ENCODE measurements at regions of chr4 and their contacts with region 1.

Region 1: GRCh38 chr4:16264798-16265197 is 38.5 kb upstream of the TAPT1 start:
- DNase-seq: peak; percentile 73
- ATAC-seq: peak; percentile 43
- H3K4me3 ChIP-seq: no peak overlapping the region
- H3K4me3 Mint-ChIP-seq: no peak overlapping the region
- H3K27ac ChIP-seq: peak overlapping the region in 1 of 2 donors; percentile 3
- H3K27ac Mint-ChIP-seq: no peak overlapping the region
- H3K4me1 ChIP-seq: peaks cover 36 to 44% of the 10 kb centered on the region in 2 donors
- H3K4me1 Mint-ChIP-seq: peaks cover 36% of the 10 kb centered on the region
- H3K27me3 ChIP-seq: no peaks in the 10 kb centered on the region
- H3K27me3 Mint-ChIP-seq: no peaks in the 10 kb centered on the region
- CTCF ChIP-seq: peak; percentile 78

Region 2: DNA sequence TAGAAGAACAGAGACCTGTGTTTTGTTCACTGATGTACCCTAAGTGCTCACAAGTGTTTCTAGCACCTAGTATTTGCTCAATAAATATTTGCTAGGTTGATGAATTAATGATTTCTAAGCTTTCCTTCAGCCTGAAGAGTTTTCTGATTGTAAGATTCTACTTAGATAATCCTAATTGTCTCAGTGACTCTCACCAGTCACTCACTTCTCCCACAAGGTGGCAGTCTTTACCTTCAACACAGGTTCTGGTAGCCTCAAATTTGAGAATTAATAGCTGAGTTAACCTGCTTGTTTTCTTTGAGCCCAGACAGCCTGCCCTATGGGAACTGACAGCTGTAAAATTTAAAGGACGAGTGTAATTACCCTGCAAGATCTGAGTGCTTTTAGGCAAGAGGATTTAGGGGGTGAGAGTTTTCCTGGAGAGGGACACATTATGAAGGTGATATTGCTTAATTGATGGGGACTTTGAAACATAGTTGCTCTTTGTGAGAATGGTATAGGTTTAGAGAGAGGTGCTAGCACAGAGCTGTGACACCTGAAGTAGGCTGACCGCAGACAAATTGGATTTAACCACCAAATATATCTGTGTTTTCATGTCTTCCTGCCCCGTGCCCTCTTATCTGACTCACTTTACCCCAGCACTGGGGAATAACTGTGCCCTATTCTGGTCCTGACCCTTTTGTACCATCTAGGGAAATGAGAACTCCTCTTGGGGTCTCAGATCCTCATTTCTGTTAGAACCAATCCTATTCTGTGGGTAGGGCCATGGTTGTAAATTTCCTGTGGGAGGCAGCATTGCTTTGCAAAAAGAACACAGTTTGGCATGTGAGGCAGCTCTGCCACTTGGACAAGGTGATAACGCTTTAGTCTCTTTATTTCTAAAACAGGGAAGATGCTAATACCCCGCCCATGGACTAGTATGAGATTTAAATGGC is 458.9 kb before region 1 on chr4:
- CTCF ChIA-PET with region 1: interaction called, 15 read pairs
- POLR2A ChIA-PET with region 1: no interaction called
- intact Hi-C with region 1: loop called (anchors 10 kb)
- DNase-seq: peak; percentile 62
- ATAC-seq: peak; percentile 67
- H3K4me3 ChIP-seq: no peak overlapping the region
- H3K4me3 Mint-ChIP-seq: no peak overlapping the region
- H3K27ac ChIP-seq: no peak overlapping the region
- H3K27ac Mint-ChIP-seq: no peak overlapping the region
- H3K4me1 ChIP-seq: peaks cover 27 to 30% of the 10 kb centered on the region in 2 donors
- H3K4me1 Mint-ChIP-seq: peaks cover 44% of the 10 kb centered on the region
- H3K27me3 ChIP-seq: no peaks in the 10 kb centered on the region
- H3K27me3 Mint-ChIP-seq: no peaks in the 10 kb centered on the region
- CTCF ChIP-seq: peak; percentile 84

Region 3: GRCh38 chr4:16019649-16020048 is 245.1 kb before region 1 on chr4:
- CTCF ChIA-PET with region 1: interaction called, 23 read pairs
- POLR2A ChIA-PET with region 1: no interaction called
- intact Hi-C with region 1: no loop called
- DNase-seq: no peak
- ATAC-seq: no peak
- H3K4me3 ChIP-seq: no peak overlapping the region
- H3K4me3 Mint-ChIP-seq: no peak overlapping the region
- H3K27ac ChIP-seq: no peak overlapping the region
- H3K27ac Mint-ChIP-seq: no peak overlapping the region
- H3K4me1 ChIP-seq: no peaks in the 10 kb centered on the region
- H3K4me1 Mint-ChIP-seq: no peaks in the 10 kb centered on the region
- H3K27me3 ChIP-seq: no peaks in the 10 kb centered on the region
- H3K27me3 Mint-ChIP-seq: peaks cover 14% of the 10 kb centered on the region
- CTCF ChIP-seq: no peak

Region 4: DNA sequence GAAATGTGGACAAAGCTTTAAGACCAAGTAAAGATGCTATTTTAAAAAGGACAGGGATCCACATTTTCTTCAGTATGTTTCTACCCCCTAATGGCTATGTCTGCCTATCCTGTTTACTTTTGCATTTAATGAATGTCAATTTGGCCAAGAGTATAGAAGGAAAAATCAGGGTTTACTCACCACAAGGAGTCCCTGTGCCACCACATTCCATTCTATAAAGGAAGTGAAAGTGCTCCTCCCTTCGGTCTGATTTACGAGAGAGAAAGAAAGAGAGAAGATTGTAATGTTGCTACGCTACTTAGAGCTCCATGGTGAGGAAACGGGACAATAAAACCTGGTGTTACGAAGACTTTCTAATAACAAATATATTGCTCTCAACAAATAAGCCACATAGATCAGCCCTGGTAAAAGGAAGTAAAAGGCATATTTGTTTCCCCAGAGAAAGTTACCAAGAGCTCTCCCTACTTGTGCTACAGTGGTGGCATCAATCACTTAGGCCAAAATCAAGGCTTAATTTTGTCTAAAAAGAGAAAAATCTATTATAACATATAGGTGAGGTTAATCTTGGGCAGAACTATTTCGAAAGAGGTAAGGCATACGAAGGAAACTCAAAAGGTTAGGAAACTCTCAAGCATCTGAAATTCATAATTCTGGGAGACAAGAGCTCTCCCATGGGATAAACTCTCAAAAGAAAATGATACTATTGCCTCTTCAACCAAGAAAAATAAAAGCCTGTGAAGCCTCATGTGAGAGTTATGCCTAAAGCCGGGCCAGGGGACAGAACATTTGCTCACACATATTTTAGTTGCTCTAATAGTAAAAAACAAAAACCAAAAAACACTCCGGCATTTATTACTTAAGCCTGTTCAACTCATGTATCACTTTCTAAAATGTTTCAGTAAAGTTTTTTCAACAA is 68.1 kb before region 1 on chr4:
- CTCF ChIA-PET with region 1: interaction called, 50 read pairs
- POLR2A ChIA-PET with region 1: interaction called, 3 read pairs
- intact Hi-C with region 1: loop called (anchors 1 kb)
- DNase-seq: peak; percentile 73
- ATAC-seq: peak; percentile 83
- H3K4me3 ChIP-seq: peak overlapping the region in 2 of 5 experiments; percentile 16 to 34
- H3K4me3 Mint-ChIP-seq: peak overlapping the region; percentile 40
- H3K27ac ChIP-seq: peak overlapping the region; percentile 40 to 62
- H3K27ac Mint-ChIP-seq: peak overlapping the region; percentile 32
- H3K4me1 ChIP-seq: peaks cover 12 to 19% of the 10 kb centered on the region in 2 donors
- H3K4me1 Mint-ChIP-seq: peaks cover 30% of the 10 kb centered on the region
- H3K27me3 ChIP-seq: no peaks in the 10 kb centered on the region
- H3K27me3 Mint-ChIP-seq: no peaks in the 10 kb centered on the region
- CTCF ChIP-seq: no peak

Region 5: DNA sequence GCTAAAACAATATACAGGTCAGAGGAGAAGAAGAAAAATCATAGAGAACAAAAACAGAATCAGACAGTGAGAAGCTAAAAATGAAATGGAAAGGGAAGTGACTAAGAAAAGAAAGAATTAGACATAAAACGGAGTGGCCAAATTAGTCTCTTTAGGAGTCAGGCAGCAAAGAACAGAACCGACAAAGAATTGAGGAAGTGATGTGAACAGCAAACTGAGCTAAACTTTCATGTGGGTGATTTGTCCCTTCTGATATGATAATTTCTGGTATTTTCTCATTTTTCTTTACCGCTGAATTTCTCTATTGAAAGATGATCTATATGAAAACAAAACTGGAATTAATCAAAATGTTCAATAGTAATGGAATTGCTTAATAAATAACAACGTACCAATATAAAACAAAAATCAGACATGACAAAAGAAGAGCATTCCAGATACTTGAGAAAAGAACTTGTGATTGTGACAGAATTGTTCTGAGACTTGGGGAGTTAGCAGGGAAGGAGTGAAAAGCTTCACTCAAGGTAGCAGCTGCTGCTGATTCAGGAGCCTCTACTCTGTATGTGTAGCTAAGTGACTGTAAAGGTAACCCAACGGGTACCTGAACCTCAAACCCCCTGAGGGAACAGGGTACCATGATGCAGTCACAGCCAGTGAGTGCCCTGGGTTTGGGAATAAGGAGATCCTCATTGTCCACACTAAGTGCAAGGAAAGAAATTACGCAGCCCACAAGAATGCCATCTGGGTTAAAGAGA is 47.3 kb before region 1 on chr4:
- CTCF ChIA-PET with region 1: interaction called, 19 read pairs
- POLR2A ChIA-PET with region 1: interaction called, 3 read pairs
- intact Hi-C with region 1: no loop called
- DNase-seq: no peak
- ATAC-seq: no peak
- H3K4me3 ChIP-seq: no peak overlapping the region
- H3K4me3 Mint-ChIP-seq: peak overlapping the region; percentile 8
- H3K27ac ChIP-seq: peak overlapping the region in 1 of 2 donors; percentile 51
- H3K27ac Mint-ChIP-seq: peak overlapping the region; percentile 7
- H3K4me1 ChIP-seq: peaks cover 25 to 31% of the 10 kb centered on the region in 2 donors
- H3K4me1 Mint-ChIP-seq: peaks cover 50% of the 10 kb centered on the region
- H3K27me3 ChIP-seq: no peaks in the 10 kb centered on the region
- H3K27me3 Mint-ChIP-seq: no peaks in the 10 kb centered on the region
- CTCF ChIP-seq: no peak

Region 6: GRCh38 chr4:16862697-16863096 is 597.9 kb after region 1 on chr4:
- CTCF ChIA-PET with region 1: no interaction called
- POLR2A ChIA-PET with region 1: no interaction called
- intact Hi-C with region 1: no loop called
- DNase-seq: no peak
- ATAC-seq: no peak
- H3K4me3 ChIP-seq: no peak overlapping the region
- H3K4me3 Mint-ChIP-seq: no peak overlapping the region
- H3K27ac ChIP-seq: no peak overlapping the region
- H3K27ac Mint-ChIP-seq: no peak overlapping the region
- H3K4me1 ChIP-seq: no peaks in the 10 kb centered on the region
- H3K4me1 Mint-ChIP-seq: no peaks in the 10 kb centered on the region
- H3K27me3 ChIP-seq: no peaks in the 10 kb centered on the region
- H3K27me3 Mint-ChIP-seq: no peaks in the 10 kb centered on the region
- CTCF ChIP-seq: no peak